ENCODE measurements at regions of chr20 and their contacts with region 1.

Region 1: GRCh38 chr20:45436732-45437391 is 20.9 kb downstream of the PIGT start:
- DNase-seq: peak; percentile 90
- ATAC-seq: peak; percentile 97
- H3K4me3 Mint-ChIP-seq: peak overlapping the region; percentile 82
- H3K27ac Mint-ChIP-seq: no peak overlapping the region
- H3K4me1 Mint-ChIP-seq: peaks cover 16% of the 10 kb centered on the region
- H3K27me3 Mint-ChIP-seq: peaks cover 5% of the 10 kb centered on the region; the same call in 1 of the 2 replicates
- CTCF ChIP-seq: peak; percentile 92

Region 2: DNA sequence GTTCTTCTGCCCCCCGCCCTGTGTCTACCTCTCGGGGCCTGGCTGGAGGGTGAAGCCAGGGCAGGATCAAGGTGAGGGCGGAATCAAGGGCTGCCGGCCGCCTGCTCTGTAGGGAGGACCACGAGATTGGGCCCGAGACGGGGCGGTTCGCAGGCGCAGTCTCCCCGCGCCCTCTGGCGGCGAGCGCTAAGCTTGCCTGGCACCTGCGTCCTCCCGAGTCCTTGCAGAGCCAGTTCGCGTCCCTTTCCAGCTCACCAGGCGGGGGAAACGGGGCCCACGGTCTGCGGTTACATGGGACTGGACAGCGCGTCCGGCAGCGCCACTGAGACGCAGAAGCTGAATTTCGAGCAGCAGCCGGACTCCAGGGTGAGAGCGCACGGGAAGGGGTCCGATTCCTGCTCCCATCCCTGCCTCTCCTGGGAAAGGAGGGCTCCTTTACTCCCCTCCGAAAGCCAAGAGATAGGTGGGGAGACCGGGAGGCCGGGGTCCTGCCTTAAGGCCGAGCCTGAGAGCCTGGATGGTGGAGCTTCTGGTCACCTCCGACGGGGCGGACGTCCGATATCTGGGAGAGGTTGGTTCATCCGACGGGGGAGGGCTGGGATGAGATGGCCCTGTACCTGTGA is 125.2 kb before region 1 on chr20:
- CTCF ChIA-PET with region 1: interaction called, 76 read pairs
- POLR2A ChIA-PET with region 1: no interaction called
- DNase-seq: peak; percentile 92
- ATAC-seq: peak; percentile 68
- H3K4me3 Mint-ChIP-seq: peak overlapping the region; percentile 63
- H3K27ac Mint-ChIP-seq: no peak overlapping the region
- H3K4me1 Mint-ChIP-seq: peaks cover 15% of the 10 kb centered on the region
- H3K27me3 Mint-ChIP-seq: peaks cover 33% of the 10 kb centered on the region
- CTCF ChIP-seq: peak; percentile 71

Region 3: DNA sequence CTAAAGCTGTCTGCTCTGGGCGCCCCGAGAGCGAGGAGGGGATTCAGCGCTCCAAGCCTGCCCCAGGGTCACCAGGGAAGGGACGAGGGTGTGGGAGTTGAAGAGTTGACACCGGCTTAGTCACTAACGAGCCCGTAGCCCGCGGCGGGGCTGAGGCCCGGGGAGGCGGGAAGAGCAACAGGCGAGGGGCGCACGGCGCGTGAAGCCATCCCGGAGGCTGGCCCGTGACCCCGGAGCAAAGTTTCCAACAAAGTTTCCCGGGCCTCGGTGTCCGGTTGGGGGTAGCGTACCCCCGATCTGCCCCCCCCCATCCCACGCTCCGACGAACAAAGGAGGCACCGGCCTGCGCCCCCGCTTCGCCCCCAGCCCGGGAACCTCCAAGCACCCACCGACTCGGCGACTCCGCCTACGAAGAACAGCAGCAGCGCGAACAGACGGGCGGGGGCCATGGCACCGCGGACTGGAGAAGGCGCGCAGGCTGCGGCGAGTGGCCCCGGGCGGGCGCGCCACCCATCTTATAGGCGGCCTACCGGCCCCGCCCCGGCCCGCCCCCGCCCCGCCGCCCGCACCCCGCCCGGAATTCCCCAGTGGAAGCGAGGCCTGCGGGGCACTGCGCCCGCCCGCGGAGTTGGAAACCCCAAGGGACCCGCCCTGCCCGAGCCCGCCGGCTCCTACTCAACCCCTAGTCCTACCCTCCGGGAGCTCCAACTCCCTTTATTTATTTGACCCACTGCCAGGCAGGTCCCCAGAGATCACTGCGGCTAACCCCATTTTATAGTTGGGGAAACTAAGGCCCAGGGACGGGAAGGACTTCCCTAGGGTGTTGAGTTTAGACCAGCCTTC is 88.7 kb before region 1 on chr20 and contains the start of gene SDC4:
- CTCF ChIA-PET with region 1: interaction called, 27 read pairs
- POLR2A ChIA-PET with region 1: no interaction called
- DNase-seq: peak; percentile 68
- ATAC-seq: peak; percentile 63
- H3K4me3 Mint-ChIP-seq: peak within 1 kb of the TSS; percentile 89
- H3K27ac Mint-ChIP-seq: peak within 1 kb of the TSS; percentile 19
- H3K4me1 Mint-ChIP-seq: peaks cover 45% of the 10 kb centered on the region
- H3K27me3 Mint-ChIP-seq: no peaks in the 10 kb centered on the region
- CTCF ChIP-seq: no peak
- total RNA-seq, gene SDC4: 64.0 to 69.6 TPM (median 69.5 TPM) in 3 replicates

Region 4: GRCh38 chr20:45406259-45407066 is 30.4 kb before region 1 on chr20:
- CTCF ChIA-PET with region 1: interaction called, 41 read pairs
- POLR2A ChIA-PET with region 1: no interaction called
- DNase-seq: peak; percentile 76
- ATAC-seq: peak; percentile 50
- H3K4me3 Mint-ChIP-seq: peak overlapping the region; percentile 84
- H3K27ac Mint-ChIP-seq: peak overlapping the region; percentile 86; the same call in 1 of the 2 replicates
- H3K4me1 Mint-ChIP-seq: peaks cover 12% of the 10 kb centered on the region
- H3K27me3 Mint-ChIP-seq: peaks cover 29% of the 10 kb centered on the region
- CTCF ChIP-seq: no peak

Region 5: DNA sequence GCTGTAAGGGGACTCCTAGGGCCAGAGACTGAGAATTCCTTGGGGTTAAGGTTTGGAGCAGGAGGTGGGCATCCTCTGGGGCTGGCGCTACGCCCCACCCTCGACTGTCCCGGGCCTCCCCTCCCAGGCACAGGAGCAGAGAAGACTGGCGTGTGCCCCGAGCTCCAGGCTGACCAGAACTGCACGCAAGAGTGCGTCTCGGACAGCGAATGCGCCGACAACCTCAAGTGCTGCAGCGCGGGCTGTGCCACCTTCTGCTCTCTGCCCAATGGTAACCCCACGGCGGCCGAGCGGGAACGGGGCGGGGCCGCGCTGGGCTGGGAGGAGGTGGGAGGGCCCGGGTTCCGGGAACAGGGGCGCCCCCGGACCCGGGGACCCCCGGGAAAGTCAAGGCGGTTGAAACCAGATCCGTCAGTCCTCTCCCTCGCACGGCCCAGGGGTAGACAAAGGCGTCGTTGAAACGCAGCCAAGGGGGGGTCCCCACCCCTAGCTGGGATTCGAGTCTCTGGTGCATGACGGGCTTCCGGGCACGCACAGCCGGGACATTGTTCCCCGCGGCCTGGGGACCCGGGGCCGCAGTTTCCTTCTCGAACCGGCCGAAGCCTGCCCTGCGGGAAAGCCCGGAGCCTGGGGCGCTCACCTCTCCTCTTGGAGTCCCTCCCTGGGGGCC is 33.5 kb after region 1 on chr20:
- CTCF ChIA-PET with region 1: interaction called, 16 read pairs
- POLR2A ChIA-PET with region 1: no interaction called
- DNase-seq: peak; percentile 69
- ATAC-seq: peak; percentile 63
- H3K4me3 Mint-ChIP-seq: peak overlapping the region; percentile 77
- H3K27ac Mint-ChIP-seq: peak overlapping the region; percentile 92
- H3K4me1 Mint-ChIP-seq: peaks cover 45% of the 10 kb centered on the region
- H3K27me3 Mint-ChIP-seq: peaks cover 7% of the 10 kb centered on the region
- CTCF ChIP-seq: no peak